BJ (cell line): ENCODE measurements at regions of chr4 and their contacts with region 1.

Region 1: DNA sequence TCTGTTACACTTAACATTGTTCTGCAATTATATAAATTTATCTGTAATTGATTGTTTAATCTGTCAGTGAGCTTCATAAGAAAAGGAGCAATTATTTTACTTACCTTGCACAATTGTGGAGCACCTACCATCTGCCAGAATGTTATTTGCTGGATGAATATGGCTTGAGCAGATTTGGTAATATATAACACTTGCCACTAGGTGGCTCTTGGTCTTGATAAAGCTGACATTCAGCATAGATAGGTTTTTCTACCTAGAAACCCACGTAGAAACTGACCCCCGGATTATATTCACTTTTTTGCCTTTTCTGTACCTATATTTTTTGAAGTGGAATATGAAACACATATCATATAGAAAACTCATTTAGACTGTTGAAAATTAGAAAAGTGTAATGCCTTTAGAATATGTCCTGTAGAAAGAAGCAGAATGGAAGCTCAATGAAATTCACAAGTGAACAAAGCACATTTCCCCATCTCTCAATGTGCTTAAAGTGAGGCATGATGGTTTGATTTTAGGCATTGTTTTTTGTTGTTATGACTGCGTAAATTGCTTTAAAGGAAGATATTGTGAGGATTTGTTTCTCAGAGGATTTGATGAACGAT is 9.5 kb downstream of the RBPJ start:
- DNase-seq: no peak
- H3K4me3 ChIP-seq: no peak overlapping the region
- H3K27me3 ChIP-seq: no peaks in the 10 kb centered on the region
- CTCF ChIP-seq: peak; percentile 65

Region 2: DNA sequence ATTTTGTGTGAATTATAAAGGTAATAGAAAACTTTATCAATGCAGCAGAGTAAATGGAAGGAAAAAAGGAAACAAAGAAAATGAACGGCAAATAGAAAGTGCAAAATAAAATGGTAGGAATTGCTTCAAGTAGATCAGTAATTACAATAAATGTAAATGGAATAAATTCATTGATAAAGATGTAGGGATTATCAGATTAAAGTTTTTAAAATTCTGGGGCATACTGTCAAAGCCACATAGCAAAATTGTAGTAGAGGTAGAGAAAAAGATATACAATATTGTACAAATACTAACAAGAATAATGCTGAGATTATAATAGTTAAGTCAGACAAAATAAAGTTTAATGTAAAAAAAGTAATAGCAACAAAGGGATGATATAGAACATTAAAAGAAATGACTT is 321.6 kb before region 1 on chr4:
- CTCF ChIA-PET with region 1: interaction called, 3 read pairs
- POLR2A ChIA-PET with region 1: interaction called, 13 read pairs
- DNase-seq: no peak
- H3K4me3 ChIP-seq: no peak overlapping the region
- H3K27me3 ChIP-seq: peaks cover 6% of the 10 kb centered on the region; the same call in 1 of the 2 replicates
- CTCF ChIP-seq: no peak

Region 3: GRCh38 chr4:26342328-26343037 is 12.2 kb after region 1 on chr4:
- CTCF ChIA-PET with region 1: interaction called, 26 read pairs
- POLR2A ChIA-PET with region 1: interaction called, 3 read pairs
- DNase-seq: no peak
- H3K4me3 ChIP-seq: no peak overlapping the region
- H3K27me3 ChIP-seq: no peaks in the 10 kb centered on the region
- CTCF ChIP-seq: no peak

Region 4: GRCh38 chr4:26349496-26349895 is 19.2 kb after region 1 on chr4:
- CTCF ChIA-PET with region 1: interaction called, 26 read pairs
- POLR2A ChIA-PET with region 1: interaction called, 3 read pairs
- DNase-seq: no peak
- H3K4me3 ChIP-seq: no peak overlapping the region
- H3K27me3 ChIP-seq: no peaks in the 10 kb centered on the region
- CTCF ChIP-seq: no peak

Region 5: GRCh38 chr4:26410385-26411293 is 80.4 kb after region 1 on chr4:
- CTCF ChIA-PET with region 1: interaction called, 76 read pairs
- POLR2A ChIA-PET with region 1: no interaction called
- DNase-seq: peak; percentile 15
- H3K4me3 ChIP-seq: no peak overlapping the region
- H3K27me3 ChIP-seq: no peaks in the 10 kb centered on the region
- CTCF ChIP-seq: peak; percentile 54